ENCODE measurements at regions of chr1 and their contacts with region 1.

Region 1: DNA sequence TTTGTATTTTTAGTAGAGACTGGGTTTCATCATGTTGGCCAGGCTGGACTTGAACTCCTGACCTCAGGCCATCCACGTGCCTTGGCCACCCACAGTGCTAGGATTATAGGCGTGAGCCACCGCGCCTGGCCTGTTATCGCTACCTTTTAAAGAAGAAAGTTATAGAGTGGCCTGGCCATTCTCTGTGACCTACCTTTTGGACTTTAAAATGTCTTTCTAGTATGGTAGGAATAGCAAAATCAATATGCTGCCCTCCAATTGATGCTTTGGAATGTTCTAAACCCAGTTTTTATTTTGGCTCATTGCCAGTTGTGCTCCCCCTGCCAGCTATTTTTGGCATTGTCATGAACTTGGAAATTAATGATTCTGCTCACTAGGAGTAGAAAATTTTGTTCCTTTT is 19.9 kb downstream of the HIPK1 start:
- DNase-seq: no peak
- H3K4me3 Mint-ChIP-seq: no peak overlapping the region
- H3K27ac Mint-ChIP-seq: peak overlapping the region; percentile 91
- H3K4me1 Mint-ChIP-seq: peaks cover 57% of the 10 kb centered on the region
- H3K27me3 Mint-ChIP-seq: no peaks in the 10 kb centered on the region

Region 2: DNA sequence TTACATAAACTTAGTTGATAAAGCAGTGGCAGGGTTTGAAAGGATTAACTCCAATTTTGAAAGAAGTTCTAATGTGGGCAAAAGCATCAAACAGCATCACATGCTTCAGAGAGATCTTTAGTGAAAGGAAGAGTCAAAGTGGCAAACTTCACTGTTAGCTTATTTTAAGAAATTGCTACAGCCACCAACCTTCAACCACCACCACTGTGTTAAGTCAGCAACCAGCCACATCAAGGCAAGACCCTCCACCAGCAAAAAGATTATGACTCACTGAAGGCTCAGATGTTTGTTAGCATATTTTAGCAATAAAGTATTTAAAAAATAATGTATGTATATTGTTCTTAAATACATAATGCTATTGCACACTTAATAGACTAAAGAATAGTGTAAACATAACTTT is 580.0 kb before region 1 on chr1:
- CTCF ChIA-PET with region 1: no interaction called
- POLR2A ChIA-PET with region 1: no interaction called
- DNase-seq: no peak
- H3K4me3 Mint-ChIP-seq: no peak overlapping the region
- H3K27ac Mint-ChIP-seq: no peak overlapping the region
- H3K4me1 Mint-ChIP-seq: peaks cover 11% of the 10 kb centered on the region
- H3K27me3 Mint-ChIP-seq: peaks cover 5% of the 10 kb centered on the region

Region 3: DNA sequence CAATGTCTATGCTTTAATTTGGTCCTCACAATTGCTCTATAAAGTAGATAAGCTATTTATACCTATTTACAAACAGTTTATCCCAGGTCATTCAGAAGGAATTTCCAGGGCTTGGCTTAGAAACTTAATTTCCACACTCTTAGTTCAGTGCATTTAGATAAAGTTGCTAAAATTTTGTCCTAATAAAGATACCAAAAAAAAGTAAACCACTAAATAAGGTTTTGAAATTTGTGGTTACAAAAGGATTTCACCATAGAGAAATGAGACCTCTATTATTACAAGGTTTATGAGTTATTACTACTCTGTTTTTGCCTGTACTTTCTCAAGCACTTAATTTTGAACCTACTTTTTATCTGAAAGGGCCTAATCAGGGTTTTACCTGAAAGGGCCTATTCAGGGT is 99.9 kb before region 1 on chr1:
- CTCF ChIA-PET with region 1: no interaction called
- POLR2A ChIA-PET with region 1: no interaction called
- DNase-seq: no peak
- H3K4me3 Mint-ChIP-seq: no peak overlapping the region
- H3K27ac Mint-ChIP-seq: no peak overlapping the region
- H3K4me1 Mint-ChIP-seq: peaks cover 15% of the 10 kb centered on the region
- H3K27me3 Mint-ChIP-seq: no peaks in the 10 kb centered on the region

Region 4: DNA sequence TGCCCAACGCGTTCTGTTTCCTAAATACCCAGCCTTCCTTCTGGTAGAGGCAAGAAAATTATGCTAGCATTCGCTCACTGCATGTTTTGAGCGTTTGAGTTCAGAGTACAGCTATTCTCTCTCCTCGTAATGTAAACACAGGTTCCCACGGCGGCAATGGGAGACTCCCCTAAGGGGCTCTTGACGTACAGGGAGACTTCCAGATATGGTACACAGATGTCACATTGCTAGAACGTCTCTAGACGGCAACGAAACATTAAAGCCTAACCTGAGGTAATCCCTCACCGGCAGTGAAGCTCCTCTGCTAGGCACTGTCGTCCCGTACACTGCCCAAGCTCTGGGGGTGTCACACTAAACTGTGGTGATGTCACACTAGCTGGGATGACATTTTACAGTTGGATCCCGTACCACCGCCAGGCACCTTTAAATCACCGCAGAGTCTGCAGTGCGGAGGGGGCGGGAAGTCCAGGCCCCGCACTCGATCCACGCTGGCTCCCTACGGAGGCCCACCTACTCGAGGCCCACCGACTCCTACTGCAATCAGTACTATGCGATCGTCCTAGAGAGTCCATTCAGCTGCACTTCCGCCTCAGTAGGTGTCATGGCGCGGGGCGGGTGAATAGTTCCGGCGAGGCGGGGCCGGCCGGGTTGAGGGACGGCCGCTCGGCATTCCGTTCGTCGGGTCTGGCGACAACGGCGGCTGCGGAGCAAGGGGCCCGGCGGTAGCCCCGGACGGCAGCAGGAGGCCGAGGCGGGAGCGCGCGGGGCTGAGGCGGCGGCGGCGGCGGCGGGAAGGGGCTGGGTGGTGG is 19.9 kb before region 1 on chr1 and contains the start of gene HIPK1:
- CTCF ChIA-PET with region 1: interaction called, 16 read pairs
- POLR2A ChIA-PET with region 1: no interaction called
- DNase-seq: peak; percentile 94
- H3K4me3 Mint-ChIP-seq: peak within 1 kb of the TSS; percentile 96
- H3K27ac Mint-ChIP-seq: peak within 1 kb of the TSS; percentile 99
- H3K4me1 Mint-ChIP-seq: peaks cover 44% of the 10 kb centered on the region
- H3K27me3 Mint-ChIP-seq: no peaks in the 10 kb centered on the region
- total RNA-seq, gene HIPK1: 88.5 to 106 TPM

Region 5: GRCh38 chr1:113998327-113998726 is 49.3 kb after region 1 on chr1:
- CTCF ChIA-PET with region 1: no interaction called
- POLR2A ChIA-PET with region 1: no interaction called
- DNase-seq: no peak
- H3K4me3 Mint-ChIP-seq: no peak overlapping the region
- H3K27ac Mint-ChIP-seq: no peak overlapping the region
- H3K4me1 Mint-ChIP-seq: no peaks in the 10 kb centered on the region
- H3K27me3 Mint-ChIP-seq: peaks cover 12% of the 10 kb centered on the region

Region 6: GRCh38 chr1:114386129-114387009 is 437.4 kb after region 1 on chr1:
- CTCF ChIA-PET with region 1: no interaction called
- POLR2A ChIA-PET with region 1: no interaction called
- DNase-seq: no peak
- H3K4me3 Mint-ChIP-seq: no peak overlapping the region
- H3K27ac Mint-ChIP-seq: no peak overlapping the region
- H3K4me1 Mint-ChIP-seq: no peaks in the 10 kb centered on the region
- H3K27me3 Mint-ChIP-seq: peaks cover 3% of the 10 kb centered on the region